HepG2 (cell line): ENCODE measurements at regions of chr14 and their contacts with region 1.

Region 1: DNA sequence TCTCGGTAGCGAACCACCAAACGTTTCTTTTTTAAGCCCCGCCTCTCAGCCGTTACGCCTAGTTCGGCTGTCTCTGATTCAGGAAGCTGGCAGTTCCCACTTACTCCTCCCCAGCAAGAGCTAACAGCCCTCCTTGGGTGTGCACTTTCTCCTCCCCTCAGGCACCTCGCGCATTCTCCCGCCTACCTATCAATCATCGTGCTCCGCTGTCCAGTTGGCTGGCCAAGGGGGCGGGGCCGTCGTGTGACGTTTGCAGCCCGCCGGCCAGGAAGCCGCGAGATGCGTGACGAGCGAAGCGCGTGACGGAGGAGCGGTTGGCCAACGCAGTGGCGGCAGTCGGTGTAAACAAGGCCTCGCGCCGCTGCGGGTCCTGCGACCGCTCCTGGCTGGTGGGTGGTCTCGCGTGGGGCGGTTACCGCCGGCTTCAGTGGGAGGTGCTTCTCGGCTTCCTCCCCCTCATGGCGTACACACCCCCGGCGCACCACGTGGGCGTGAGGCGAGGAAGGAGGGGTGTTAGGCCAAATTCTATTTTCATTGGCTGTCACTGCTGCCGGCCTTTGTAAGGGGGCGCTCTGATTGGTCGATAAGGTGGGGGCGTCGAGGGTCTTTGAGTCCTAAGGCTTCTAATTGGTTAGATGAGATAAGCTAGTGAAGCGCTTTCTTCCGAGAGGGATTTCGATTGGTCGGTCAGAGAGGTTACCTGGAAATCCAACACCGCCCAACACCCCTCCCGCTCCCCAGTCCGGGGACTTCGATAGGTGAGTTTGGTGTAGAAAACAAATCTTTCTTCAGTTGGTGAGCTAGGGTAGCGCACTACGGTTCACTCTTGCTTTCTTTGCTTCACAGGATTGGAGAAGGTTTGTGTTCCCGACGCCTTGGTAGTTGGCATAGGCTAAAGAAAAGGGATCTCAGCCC is at the starts of genes DCAF11 and NRL:
- DNase-seq: peak; percentile 100
- ATAC-seq: peak; percentile 88
- H3K4me3 ChIP-seq: peak within 1 kb of the TSS; percentile 66 to 96 (median 85)
- H3K27ac ChIP-seq: peak within 1 kb of the TSS; percentile 98
- H3K4me1 ChIP-seq: peaks cover 48% of the 10 kb centered on the region
- H3K27me3 ChIP-seq: no peaks in the 10 kb centered on the region; a peak in 1 of 5 replicates
- CTCF ChIP-seq: peak; percentile 50
- EP300 ChIP-seq: peak in 1 of 2 experiments; percentile 77; a peak in 2 of 4 replicates
- POLR2A ChIP-seq: peak in 1 of 2 experiments; percentile 97; a peak in 2 of 4 replicates
- RAD21 ChIP-seq: peak; percentile 78
- total RNA-seq, gene DCAF11: 257 and 342 TPM in 2 replicates
- total RNA-seq, gene NRL: 4.7 and 5.2 TPM in 2 replicates

Region 2: GRCh38 chr14:22589096-22589839 is 1525.5 kb before region 1 on chr14 and contains the start of gene DAD1:
- CTCF ChIA-PET with region 1: no interaction called
- POLR2A ChIA-PET with region 1: no interaction called
- in situ Hi-C with region 1: loop called (anchors 25 kb)
- intact Hi-C with region 1: no loop called
- DNase-seq: peak; percentile 100
- ATAC-seq: peak; percentile 98
- H3K4me3 ChIP-seq: peak within 1 kb of the TSS; percentile 85 to 92 (median 86)
- H3K27ac ChIP-seq: peak within 1 kb of the TSS; percentile 80
- H3K4me1 ChIP-seq: peaks cover 52% of the 10 kb centered on the region
- H3K27me3 ChIP-seq: peaks cover 0 to 23% of the 10 kb centered on the region in 2 experiments; a peak in 2 of 5 replicates
- CTCF ChIP-seq: no peak
- EP300 ChIP-seq: 0 out of 4 replicates have a peak, but pooled peaks of 1 of the 2 experiments have one; percentile 19
- POLR2A ChIP-seq: peak in 1 of 2 experiments; percentile 97; a peak in 2 of 4 replicates
- RAD21 ChIP-seq: peak; percentile 67; the same call in 1 of the 2 replicates
- total RNA-seq, gene DAD1: 385 and 558 TPM in 2 replicates

Region 3: DNA sequence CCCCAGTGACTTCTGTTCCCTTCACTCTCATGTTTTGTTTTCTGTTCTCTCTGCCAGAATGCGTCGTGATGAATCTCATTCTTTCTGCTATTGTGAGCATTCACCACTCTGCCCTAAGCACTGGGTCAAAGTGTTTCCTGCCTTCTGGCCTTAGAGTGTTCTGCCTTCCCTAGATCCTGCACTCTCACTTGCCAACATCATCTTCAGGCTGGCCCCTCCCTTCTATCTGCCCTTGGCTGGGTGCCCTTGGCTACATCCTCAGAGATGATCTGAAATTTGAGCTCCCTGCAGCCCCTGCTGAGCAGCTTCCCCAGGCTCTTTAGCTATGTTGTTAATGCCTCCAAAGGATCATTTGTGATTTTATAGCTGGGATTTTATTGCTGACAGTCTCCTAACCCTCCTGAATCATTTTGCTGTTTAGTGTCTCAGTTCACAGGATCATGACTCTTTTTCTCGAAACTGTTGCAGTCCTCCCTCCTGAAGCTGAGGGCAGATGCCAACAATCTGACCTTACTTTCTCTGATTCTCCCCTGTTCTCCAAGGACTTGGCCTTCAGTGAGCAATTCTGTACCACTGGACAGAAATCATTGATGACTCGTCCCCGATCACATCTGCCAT is 474.2 kb before region 1 on chr14:
- CTCF ChIA-PET with region 1: no interaction called
- POLR2A ChIA-PET with region 1: interaction called, 29 read pairs
- in situ Hi-C with region 1: no loop called
- intact Hi-C with region 1: no loop called
- DNase-seq: peak; percentile 54
- ATAC-seq: no peak
- H3K4me3 ChIP-seq: peak overlapping the region in 1 of 3 experiments; percentile 74; a peak in 1 of 6 replicates
- H3K27ac ChIP-seq: peak overlapping the region; percentile 59
- H3K4me1 ChIP-seq: peaks cover 65% of the 10 kb centered on the region
- H3K27me3 ChIP-seq: no peaks in the 10 kb centered on the region; a peak in 1 of 5 replicates
- CTCF ChIP-seq: no peak
- EP300 ChIP-seq: no peak
- POLR2A ChIP-seq: peak in 1 of 2 experiments; percentile 77; a peak in 2 of 4 replicates
- RAD21 ChIP-seq: no peak

Region 4: DNA sequence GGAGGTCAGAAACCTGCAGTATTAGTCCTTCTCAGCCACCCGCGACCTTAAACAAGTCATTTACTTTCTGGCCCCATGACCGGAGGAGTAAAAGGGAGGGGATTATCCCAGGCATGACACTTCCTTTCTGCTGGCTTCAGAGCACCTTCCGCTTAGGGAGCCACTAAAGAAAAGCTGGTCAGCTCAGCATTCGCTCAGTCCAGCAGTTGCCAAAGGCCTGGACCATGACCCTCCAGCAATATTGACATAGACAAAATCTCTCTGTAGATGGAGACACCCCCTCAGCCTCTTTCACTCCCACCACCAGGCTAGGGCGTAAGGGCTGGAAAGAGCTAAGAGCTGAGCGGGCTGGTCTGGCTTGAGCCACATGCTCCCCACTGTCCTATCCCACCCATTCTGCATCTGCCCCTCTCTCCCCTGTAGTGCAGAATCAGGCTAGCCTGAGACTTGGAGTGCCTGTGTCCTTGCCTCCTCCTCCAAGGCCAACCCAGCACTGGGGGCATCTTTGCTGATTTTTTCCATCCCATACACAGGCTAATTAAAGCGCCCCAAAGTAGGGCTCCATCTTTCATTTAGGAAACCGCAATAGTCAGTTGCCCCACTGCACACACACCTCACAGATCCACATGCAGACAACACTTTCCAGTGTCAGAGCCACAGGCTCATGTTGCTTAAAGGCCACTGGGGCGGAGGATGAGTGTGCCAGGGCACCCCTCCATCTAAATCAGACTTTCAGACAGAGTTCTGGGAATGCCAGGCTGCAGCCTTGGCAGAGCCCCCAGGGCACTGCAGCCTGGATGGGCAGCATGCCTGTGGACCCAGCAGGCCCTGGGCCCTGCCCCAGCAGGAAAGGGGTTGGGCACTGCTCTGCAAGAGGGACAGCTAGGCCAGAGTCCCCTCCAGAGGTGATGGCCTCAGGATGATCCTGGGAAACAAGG is 47.4 kb before region 1 on chr14:
- CTCF ChIA-PET with region 1: no interaction called
- POLR2A ChIA-PET with region 1: interaction called, 14 read pairs
- in situ Hi-C with region 1: no loop called
- intact Hi-C with region 1: no loop called
- DNase-seq: peak; percentile 72
- ATAC-seq: peak; percentile 78
- H3K4me3 ChIP-seq: peak overlapping the region in 2 of 3 experiments; percentile 6 to 49; a peak in 4 of 6 replicates
- H3K27ac ChIP-seq: peak overlapping the region; percentile 3
- H3K4me1 ChIP-seq: peaks cover 33% of the 10 kb centered on the region
- H3K27me3 ChIP-seq: peaks cover 11 to 49% of the 10 kb centered on the region in 2 experiments; a peak in 3 of 5 replicates
- CTCF ChIP-seq: peak; percentile 44
- EP300 ChIP-seq: peak in 1 of 2 experiments; percentile 25; a peak in 1 of 4 replicates
- POLR2A ChIP-seq: no peak
- RAD21 ChIP-seq: no peak

Region 5: DNA sequence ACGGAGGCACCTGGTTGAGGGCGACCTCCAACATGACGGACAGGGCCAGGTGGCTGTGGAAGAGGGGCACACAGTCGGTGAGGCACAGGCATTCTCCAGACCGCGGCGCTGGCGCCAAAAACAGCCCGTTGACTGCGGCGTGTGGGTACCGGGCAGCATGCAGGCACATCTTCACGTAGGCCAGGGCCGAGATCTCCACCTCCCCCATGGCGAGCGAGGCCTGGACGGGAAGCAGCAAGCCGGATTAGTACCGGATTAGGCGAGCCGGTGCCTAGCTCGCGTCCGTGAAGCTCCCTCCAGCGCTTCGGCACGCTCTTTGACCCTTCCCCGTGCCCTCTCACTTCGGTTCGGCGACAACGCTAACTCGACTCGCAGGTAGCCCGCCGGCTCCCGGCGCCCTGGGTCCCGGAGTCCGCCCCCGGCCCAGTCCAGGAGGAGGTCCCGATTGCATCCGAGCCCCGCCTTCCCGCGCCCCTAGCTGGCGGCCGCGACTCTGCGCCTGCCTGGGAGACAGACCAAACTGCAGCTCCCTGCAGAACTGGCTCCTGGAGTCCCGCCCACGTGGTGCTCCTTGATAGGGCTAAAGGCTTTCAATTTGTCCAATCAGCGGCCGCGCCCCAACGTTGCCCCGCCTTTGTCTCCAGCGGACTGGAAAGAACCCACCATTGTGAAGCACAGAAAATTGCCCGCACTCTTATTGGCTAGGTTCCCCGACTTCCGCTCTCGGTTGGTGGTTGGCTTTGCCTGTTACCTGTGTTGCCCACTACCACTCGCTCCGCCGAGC is 26.5 kb after region 1 on chr14 and contains the start of gene EMC9:
- CTCF ChIA-PET with region 1: no interaction called
- POLR2A ChIA-PET with region 1: interaction called, 977 read pairs
- in situ Hi-C with region 1: no loop called
- intact Hi-C with region 1: loop called (anchors 1 kb)
- DNase-seq: peak; percentile 100
- ATAC-seq: peak; percentile 88
- H3K4me3 ChIP-seq: peak within 1 kb of the TSS; percentile 83 to 99 (median 95)
- H3K27ac ChIP-seq: peak within 1 kb of the TSS; percentile 86
- H3K4me1 ChIP-seq: peaks cover 77% of the 10 kb centered on the region
- H3K27me3 ChIP-seq: peaks cover 0 to 3% of the 10 kb centered on the region in 2 experiments; a peak in 1 of 5 replicates
- CTCF ChIP-seq: peak; percentile 53
- EP300 ChIP-seq: peak in 1 of 2 experiments; percentile 70; a peak in 2 of 4 replicates
- POLR2A ChIP-seq: peak in 1 of 2 experiments; percentile 88; a peak in 2 of 4 replicates
- RAD21 ChIP-seq: peak; percentile 84
- total RNA-seq, gene EMC9: 71.2 and 78.7 TPM in 2 replicates

Region 6: GRCh38 chr14:24215495-24216344 is 100.9 kb after region 1 on chr14 and contains the start of gene MDP1:
- CTCF ChIA-PET with region 1: no interaction called
- POLR2A ChIA-PET with region 1: interaction called, 67 read pairs
- in situ Hi-C with region 1: no loop called
- intact Hi-C with region 1: no loop called
- DNase-seq: peak; percentile 95
- ATAC-seq: peak; percentile 81
- H3K4me3 ChIP-seq: peak within 1 kb of the TSS; percentile 67 to 98 (median 81)
- H3K27ac ChIP-seq: peak within 1 kb of the TSS; percentile 72
- H3K4me1 ChIP-seq: peaks cover 39% of the 10 kb centered on the region
- H3K27me3 ChIP-seq: no peaks in the 10 kb centered on the region; a peak in 1 of 5 replicates
- CTCF ChIP-seq: peak; percentile 100
- EP300 ChIP-seq: peak in 1 of 2 experiments; percentile 74; a peak in 3 of 4 replicates
- POLR2A ChIP-seq: peak in 1 of 2 experiments; percentile 97; a peak in 2 of 4 replicates
- RAD21 ChIP-seq: peak; percentile 96
- total RNA-seq, gene MDP1: 48.7 and 66.0 TPM in 2 replicates

Region 7: GRCh38 chr14:24289649-24290249 is 175.0 kb after region 1 on chr14:
- CTCF ChIA-PET with region 1: no interaction called
- POLR2A ChIA-PET with region 1: no interaction called
- in situ Hi-C with region 1: no loop called
- intact Hi-C with region 1: no loop called
- DNase-seq: no peak
- ATAC-seq: no peak
- H3K4me3 ChIP-seq: no peak overlapping the region
- H3K27ac ChIP-seq: no peak overlapping the region
- H3K4me1 ChIP-seq: peaks cover 10% of the 10 kb centered on the region
- H3K27me3 ChIP-seq: no peaks in the 10 kb centered on the region
- CTCF ChIP-seq: no peak
- EP300 ChIP-seq: no peak
- POLR2A ChIP-seq: no peak
- RAD21 ChIP-seq: no peak

Region 8: DNA sequence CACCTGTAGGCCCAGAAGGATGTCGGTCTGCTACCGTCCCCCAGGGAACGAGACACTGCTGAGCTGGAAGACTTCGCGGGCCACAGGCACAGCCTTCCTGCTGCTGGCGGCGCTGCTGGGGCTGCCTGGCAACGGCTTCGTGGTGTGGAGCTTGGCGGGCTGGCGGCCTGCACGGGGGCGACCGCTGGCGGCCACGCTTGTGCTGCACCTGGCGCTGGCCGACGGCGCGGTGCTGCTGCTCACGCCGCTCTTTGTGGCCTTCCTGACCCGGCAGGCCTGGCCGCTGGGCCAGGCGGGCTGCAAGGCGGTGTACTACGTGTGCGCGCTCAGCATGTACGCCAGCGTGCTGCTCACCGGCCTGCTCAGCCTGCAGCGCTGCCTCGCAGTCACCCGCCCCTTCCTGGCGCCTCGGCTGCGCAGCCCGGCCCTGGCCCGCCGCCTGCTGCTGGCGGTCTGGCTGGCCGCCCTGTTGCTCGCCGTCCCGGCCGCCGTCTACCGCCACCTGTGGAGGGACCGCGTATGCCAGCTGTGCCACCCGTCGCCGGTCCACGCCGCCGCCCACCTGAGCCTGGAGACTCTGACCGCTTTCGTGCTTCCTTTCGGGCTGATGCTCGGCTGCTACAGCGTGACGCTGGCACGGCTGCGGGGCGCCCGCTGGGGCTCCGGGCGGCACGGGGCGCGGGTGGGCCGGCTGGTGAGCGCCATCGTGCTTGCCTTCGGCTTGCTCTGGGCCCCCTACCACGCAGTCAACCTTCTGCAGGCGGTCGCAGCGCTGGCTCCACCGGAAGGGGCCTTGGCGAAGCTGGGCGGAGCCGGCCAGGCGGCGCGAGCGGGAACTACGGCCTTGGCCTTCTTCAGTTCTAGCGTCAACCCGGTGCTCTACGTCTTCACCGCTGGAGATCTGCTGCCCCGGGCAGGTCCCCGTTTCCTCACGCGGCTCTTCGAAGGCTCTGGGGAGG is 196.1 kb after region 1 on chr14 and contains the start of gene LTB4R:
- CTCF ChIA-PET with region 1: no interaction called
- POLR2A ChIA-PET with region 1: interaction called, 53 read pairs
- in situ Hi-C with region 1: no loop called
- intact Hi-C with region 1: no loop called
- DNase-seq: no peak
- ATAC-seq: no peak
- H3K4me3 ChIP-seq: no peak within 1 kb of the TSS
- H3K27ac ChIP-seq: peak within 1 kb of the TSS; percentile 4
- H3K4me1 ChIP-seq: peaks cover 61% of the 10 kb centered on the region
- H3K27me3 ChIP-seq: no peaks in the 10 kb centered on the region; a peak in 1 of 5 replicates
- CTCF ChIP-seq: no peak
- EP300 ChIP-seq: no peak
- POLR2A ChIP-seq: no peak
- RAD21 ChIP-seq: no peak
- total RNA-seq, gene LTB4R: 1.00 and 3.2 TPM in 2 replicates